Astrocyte of the cerebellum (primary cell): ENCODE measurements at regions of chr15 and their contacts with region 1.

Region 1: GRCh38 chr15:48472753-48473152 is 141.5 kb downstream of the DUT start:
- DNase-seq: no peak
- H3K4me3 ChIP-seq: no peak overlapping the region
- CTCF ChIP-seq: no peak

Region 2: GRCh38 chr15:48528921-48529320 is 56.2 kb after region 1 on chr15:
- in situ Hi-C with region 1: loop called (anchors 5 kb)
- DNase-seq: no peak
- H3K4me3 ChIP-seq: no peak overlapping the region
- CTCF ChIP-seq: no peak

Region 3: DNA sequence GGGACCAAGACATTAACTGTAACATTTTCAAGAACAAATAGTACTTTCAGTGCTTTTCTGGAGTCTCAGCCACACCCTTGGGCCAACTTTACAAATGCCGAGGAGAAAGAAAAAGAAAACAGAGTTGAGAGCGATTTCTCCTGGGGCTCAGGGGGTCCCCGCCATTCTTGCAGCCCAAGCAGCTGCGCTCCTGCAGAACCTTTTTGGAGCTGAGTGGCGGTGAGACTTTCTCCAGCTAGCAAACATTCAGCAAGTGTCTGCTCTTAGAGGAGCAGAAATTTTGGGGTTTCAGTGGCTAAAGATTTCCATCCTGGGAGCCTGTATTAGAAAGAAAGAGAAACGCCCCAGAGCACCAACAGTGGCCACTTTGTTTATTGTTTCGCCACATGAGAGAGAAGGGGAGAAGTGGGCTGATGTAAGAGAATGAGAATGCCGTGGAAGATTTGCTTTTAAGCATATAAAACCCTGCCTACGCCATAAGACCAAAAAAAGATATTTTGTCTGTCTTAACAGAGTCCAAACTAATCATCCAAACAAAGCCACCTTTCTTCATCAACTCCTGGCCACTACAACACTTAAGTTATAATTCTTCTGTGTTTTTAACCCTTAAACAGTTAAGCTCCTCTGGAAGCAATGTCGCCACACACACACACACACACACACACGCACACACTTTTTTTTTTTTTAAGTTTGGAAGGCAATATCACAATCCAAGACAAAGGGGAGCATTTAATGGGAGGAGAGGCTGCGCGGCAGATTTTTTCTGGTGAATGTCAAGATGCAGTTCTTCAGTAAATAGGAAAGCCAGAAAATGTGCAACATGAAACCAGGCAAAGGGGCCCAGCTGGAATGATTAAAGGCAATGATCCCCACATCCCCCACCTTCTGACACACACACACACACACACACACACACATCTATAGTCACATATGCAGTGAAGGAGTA is 424.4 kb after region 1 on chr15:
- in situ Hi-C with region 1: no loop called
- DNase-seq: peak; percentile 57
- H3K4me3 ChIP-seq: peak overlapping the region; percentile 1
- CTCF ChIP-seq: peak; percentile 8